Activated naive CD4-positive, alpha-beta T cell treated with anti-CD3 and anti-CD28 coated beads for 36 hours (primary cell): ENCODE measurements at regions of chr19 and their contacts with region 1.

Region 1: GRCh38 chr19:52048555-52049501 is at the start of gene ZNF432:
- DNase-seq: peak; percentile 82
- H3K4me3 Mint-ChIP-seq: peak within 1 kb of the TSS; percentile 93
- H3K27ac Mint-ChIP-seq: peak within 1 kb of the TSS; percentile 99
- H3K4me1 Mint-ChIP-seq: peaks cover 11% of the 10 kb centered on the region
- H3K27me3 Mint-ChIP-seq: no peaks in the 10 kb centered on the region
- total RNA-seq, gene ZNF432: 6.2 to 6.7 TPM

Region 2: DNA sequence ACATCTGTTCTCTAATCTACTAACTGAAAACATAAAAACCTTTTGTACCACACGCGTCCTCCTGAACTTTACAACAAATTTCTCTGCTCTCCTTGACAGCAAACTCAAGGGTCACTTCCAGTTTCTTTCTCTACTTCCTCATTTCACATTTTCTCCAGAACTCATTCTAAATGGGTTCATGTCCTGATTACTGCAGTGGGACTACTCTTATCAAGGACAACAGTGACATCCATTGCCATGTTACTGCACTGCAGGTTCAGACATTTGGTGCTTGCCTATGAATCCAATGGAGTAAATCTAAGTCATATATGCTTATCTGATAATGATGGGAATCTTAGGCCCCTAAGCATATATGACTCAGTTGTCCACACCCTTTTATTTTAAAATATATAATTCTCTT is 218.6 kb before region 1 on chr19:
- CTCF ChIA-PET with region 1: no interaction called
- intact Hi-C with region 1: no loop called
- DNase-seq: no peak
- H3K4me3 Mint-ChIP-seq: no peak overlapping the region
- H3K27ac Mint-ChIP-seq: no peak overlapping the region
- H3K4me1 Mint-ChIP-seq: no peaks in the 10 kb centered on the region
- H3K27me3 Mint-ChIP-seq: no peaks in the 10 kb centered on the region

Region 3: DNA sequence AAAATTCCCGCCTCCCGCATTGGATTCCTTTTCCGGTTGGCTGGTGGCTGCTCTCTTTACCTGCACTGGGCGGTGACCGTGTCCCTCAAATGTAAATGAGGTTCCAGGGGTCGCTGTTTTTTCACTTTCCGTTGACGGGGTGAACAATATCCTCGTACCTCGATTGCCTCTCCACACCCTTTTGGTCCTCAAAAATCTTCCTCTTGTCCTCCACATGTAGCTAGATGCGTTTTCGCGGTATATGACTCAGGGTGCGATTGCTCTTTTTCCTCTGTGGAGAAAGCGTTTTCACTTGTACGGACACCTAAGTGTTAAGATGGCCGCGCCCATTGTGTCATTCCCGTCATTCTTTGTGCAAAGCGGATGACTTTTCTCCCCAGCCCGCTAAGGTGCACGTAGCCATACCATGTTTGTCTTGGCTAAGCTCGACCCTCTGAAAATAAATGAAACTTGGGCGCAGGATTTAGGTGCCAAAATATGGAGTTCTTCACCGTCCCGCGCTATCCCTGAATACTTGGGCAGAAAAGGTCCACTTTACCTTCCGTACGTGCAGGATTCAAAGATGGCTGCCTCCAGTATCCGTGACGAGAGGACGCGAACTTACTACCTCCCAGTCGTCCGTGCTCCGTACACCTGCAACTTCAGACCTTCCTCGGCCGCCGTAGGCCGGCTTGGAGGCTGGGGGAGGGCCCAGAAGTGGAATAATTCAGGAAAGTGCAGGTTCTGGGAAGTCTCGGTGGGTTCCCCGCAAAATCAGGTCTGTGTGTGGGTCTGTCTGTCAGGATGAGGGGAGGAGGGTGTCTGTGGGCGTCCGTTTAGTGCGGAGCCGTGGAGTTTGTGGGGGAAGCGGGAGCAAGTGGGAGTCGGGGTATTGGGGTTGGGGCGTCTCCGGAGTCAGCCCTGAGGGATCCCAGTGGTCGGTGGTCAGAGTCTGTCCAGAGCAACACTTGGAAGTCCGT is 121.8 kb before region 1 on chr19 and contains the start of gene ZNF613:
- CTCF ChIA-PET with region 1: no interaction called
- intact Hi-C with region 1: loop called (anchors 5 kb)
- DNase-seq: peak; percentile 91
- H3K4me3 Mint-ChIP-seq: peak within 1 kb of the TSS; percentile 96
- H3K27ac Mint-ChIP-seq: peak within 1 kb of the TSS; percentile 96
- H3K4me1 Mint-ChIP-seq: peaks cover 21% of the 10 kb centered on the region
- H3K27me3 Mint-ChIP-seq: no peaks in the 10 kb centered on the region
- total RNA-seq, gene ZNF613: 2.0 to 3.1 TPM

Region 4: GRCh38 chr19:52007806-52008557 is 40.8 kb before region 1 on chr19 and contains the start of gene ZNF615:
- CTCF ChIA-PET with region 1: no interaction called
- intact Hi-C with region 1: loop called (anchors 1 kb)
- DNase-seq: peak; percentile 91
- H3K4me3 Mint-ChIP-seq: peak within 1 kb of the TSS; percentile 88
- H3K27ac Mint-ChIP-seq: peak within 1 kb of the TSS; percentile 97
- H3K4me1 Mint-ChIP-seq: peaks cover 12% of the 10 kb centered on the region
- H3K27me3 Mint-ChIP-seq: no peaks in the 10 kb centered on the region
- total RNA-seq, gene ZNF615: 6.8 to 7.9 TPM

Region 5: GRCh38 chr19:52095172-52096014 is 46.6 kb after region 1 on chr19 and contains the start of gene ZNF841:
- CTCF ChIA-PET with region 1: no interaction called
- intact Hi-C with region 1: loop called (anchors 1 kb)
- DNase-seq: peak; percentile 94
- H3K4me3 Mint-ChIP-seq: peak within 1 kb of the TSS; percentile 91
- H3K27ac Mint-ChIP-seq: peak within 1 kb of the TSS; percentile 93
- H3K4me1 Mint-ChIP-seq: peaks cover 19% of the 10 kb centered on the region
- H3K27me3 Mint-ChIP-seq: no peaks in the 10 kb centered on the region
- total RNA-seq, gene ZNF841: 13.3 to 15.5 TPM